Breast epithelium (tissue), 4 donors: ENCODE measurements at regions of chr7 and their contacts with region 1.

Region 1: DNA sequence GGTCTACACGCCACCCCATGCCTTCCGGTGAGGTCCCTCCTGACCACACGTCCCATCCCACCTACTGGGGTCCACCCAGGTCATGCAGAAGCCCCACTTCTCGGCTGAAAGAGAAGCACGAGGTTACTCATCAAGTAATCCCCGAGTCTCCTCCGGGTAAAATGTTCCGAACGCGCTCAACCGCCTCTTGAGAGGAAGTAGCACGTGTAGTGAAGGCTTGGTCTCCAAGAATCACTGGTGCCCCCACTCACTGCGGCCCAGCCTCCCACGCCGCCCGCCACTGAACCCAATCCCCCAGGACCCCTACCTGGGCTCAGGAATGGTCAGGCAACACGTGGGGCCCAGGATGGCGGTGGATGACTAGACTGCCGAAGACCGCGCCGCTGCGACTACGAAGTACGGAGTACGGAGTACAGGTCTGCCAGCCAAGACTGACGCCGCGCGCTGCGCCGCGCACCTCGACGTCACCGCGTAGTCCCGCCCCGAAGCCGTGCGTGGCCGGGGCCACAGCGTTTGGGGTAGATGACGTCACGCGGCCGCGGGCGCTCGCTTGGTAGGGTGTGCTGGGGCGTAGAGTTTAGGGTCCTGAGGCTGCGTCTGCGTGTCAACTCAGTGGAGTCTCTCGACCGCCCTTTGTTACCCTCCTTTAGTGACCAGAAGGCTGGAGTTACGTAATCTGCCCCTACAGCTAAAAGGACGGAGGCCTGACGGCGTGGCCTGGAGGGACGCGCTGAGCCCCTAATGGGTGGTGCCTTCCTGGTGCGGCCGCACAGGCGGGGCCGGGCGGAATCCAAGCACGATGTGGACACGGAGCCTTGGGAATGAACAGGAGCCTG is 7.6 kb upstream of the MYO1G start:
- DNase-seq: peak; percentile 86 to 93
- H3K4me3 ChIP-seq: peak overlapping the region; percentile 55 to 76 (median 59)
- H3K27ac ChIP-seq: peak overlapping the region; percentile 97 to 98
- H3K4me1 ChIP-seq: peaks cover 0 to 6% of the 10 kb centered on the region in 2 donors
- H3K27me3 ChIP-seq: no peaks in the 10 kb centered on the region
- CTCF ChIP-seq: peak in 1 of 3 donors; percentile 11
- POLR2A ChIP-seq: peak; percentile 95

Region 2: GRCh38 chr7:44953156-44953555 is 33.3 kb before region 1 on chr7:
- intact Hi-C with region 1: loop called (anchors 2 kb)
- DNase-seq: peak in 1 of 2 donors; percentile 12
- H3K4me3 ChIP-seq: no peak overlapping the region
- H3K27ac ChIP-seq: no peak overlapping the region
- H3K4me1 ChIP-seq: no peaks in the 10 kb centered on the region
- H3K27me3 ChIP-seq: no peaks in the 10 kb centered on the region
- CTCF ChIP-seq: no peak
- POLR2A ChIP-seq: no peak